ENCODE measurements at regions of chr17 and their contacts with region 1.

Region 1: DNA sequence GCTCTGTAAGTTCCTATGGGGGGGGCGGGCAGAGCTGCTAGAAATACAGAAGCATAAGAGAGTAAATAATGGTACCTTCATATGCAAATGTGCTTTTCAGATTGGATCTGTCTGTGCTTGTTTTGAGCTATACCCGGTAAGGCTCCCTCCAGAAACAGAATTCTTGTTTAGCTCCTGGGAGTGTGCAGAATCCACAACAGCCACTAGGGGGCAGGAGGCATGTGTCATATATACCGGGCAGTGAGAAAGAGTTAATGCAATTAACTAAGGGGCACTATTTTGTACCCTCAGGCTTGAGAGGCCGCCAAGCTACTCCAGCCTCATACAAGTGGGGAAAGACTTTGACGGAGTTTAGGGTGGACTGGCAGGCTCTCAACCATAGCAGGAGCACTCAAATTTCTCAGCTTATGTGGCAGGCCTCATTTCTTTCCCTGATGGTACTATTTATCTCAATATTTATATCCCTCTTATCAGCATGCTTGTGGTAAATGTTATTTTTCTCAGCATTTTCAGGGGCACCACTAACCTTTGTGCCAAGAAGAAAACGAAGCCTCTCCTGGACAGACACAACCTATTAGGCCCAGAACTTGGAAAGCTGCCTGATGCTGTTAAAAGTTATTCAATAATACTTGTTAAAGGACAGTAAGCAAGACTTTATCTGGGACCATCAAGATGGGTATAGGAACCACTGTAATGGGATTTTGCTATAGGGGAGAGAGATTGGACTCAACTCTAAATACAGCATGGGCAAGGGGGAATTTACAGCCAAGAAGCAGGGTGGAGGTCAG is 10.7 kb upstream of the CENPV start:
- DNase-seq: peak; percentile 93
- ATAC-seq: peak; percentile 98
- H3K4me3 Mint-ChIP-seq: no peak overlapping the region
- H3K27ac Mint-ChIP-seq: no peak overlapping the region
- H3K4me1 Mint-ChIP-seq: peaks cover 8% of the 10 kb centered on the region
- H3K27me3 Mint-ChIP-seq: no peaks in the 10 kb centered on the region
- CTCF ChIP-seq: peak; percentile 91

Region 2: DNA sequence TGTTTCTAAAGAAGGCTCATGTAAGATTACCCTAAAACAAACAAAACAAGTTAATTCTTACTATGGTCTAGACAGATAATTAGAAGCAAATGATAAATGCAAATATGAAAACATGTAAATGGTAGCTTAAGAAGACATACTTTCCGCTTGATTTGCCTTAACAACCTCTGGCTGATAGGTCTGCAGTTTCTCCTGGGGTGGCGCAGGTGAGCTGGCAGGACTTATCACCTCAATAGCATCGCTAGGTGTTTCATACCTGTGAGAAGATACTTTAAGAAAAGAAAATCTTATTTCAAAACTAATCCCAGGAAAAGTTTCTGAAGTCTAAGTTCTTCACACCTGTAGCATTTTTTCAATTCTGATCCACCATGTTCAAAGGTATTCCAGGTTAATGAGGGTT is 305.6 kb before region 1 on chr17:
- CTCF ChIA-PET with region 1: no interaction called
- POLR2A ChIA-PET with region 1: no interaction called
- intact Hi-C with region 1: no loop called
- DNase-seq: no peak
- ATAC-seq: no peak
- H3K4me3 Mint-ChIP-seq: no peak overlapping the region
- H3K27ac Mint-ChIP-seq: no peak overlapping the region
- H3K4me1 Mint-ChIP-seq: peaks cover 2% of the 10 kb centered on the region
- H3K27me3 Mint-ChIP-seq: no peaks in the 10 kb centered on the region
- CTCF ChIP-seq: no peak

Region 3: DNA sequence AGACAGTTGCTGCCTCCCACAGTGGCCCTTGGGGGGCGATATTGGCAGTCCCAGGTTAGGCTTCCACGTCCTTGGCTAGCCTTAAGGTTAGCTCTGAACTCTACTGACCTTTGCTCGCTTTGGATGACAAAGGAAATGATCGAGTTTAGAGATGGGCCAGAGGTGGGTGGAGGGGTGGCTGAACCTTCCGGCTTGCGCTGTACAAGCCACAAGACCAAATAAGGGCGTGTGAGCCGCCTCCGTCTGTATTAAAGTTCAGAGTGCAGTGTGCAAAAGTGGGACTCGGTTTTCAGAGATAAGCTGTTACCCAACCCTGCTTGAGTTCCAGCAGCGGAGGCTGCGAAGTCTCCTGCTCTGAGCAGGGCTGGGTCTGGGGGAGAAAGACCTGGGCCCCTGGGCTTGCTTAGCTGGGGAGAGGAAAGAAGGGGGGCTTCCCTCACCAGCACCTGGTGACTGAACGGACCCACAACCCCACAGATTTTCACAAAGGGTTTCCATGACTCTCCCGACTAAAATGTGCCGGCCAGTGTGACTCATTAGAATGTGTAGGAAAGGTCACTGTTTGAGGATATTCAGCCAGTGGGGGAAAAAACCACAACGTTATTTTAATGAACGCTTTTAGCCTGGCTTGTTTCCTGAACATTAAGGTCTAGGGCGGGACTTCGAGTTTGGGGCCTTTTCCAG is 77.8 kb before region 1 on chr17:
- CTCF ChIA-PET with region 1: interaction called, 15 read pairs
- POLR2A ChIA-PET with region 1: no interaction called
- intact Hi-C with region 1: loop called (anchors 10 kb)
- DNase-seq: peak; percentile 95
- ATAC-seq: peak; percentile 95
- H3K4me3 Mint-ChIP-seq: peak overlapping the region; percentile 71
- H3K27ac Mint-ChIP-seq: peak overlapping the region; percentile 98
- H3K4me1 Mint-ChIP-seq: peaks cover 55% of the 10 kb centered on the region
- H3K27me3 Mint-ChIP-seq: no peaks in the 10 kb centered on the region
- CTCF ChIP-seq: peak; percentile 28

Region 4: GRCh38 chr17:16353317-16354174 is 10.4 kb before region 1 on chr17 and contains the start of gene CENPV:
- CTCF ChIA-PET with region 1: interaction called, 69 read pairs
- POLR2A ChIA-PET with region 1: interaction called, 4 read pairs
- intact Hi-C with region 1: no loop called
- DNase-seq: peak; percentile 66
- ATAC-seq: peak; percentile 82
- H3K4me3 Mint-ChIP-seq: peak within 1 kb of the TSS; percentile 97
- H3K27ac Mint-ChIP-seq: peak within 1 kb of the TSS; percentile 93
- H3K4me1 Mint-ChIP-seq: peaks cover 18% of the 10 kb centered on the region
- H3K27me3 Mint-ChIP-seq: no peaks in the 10 kb centered on the region
- CTCF ChIP-seq: peak; percentile 9
- total RNA-seq, gene CENPV: 139 to 142 TPM

Region 5: DNA sequence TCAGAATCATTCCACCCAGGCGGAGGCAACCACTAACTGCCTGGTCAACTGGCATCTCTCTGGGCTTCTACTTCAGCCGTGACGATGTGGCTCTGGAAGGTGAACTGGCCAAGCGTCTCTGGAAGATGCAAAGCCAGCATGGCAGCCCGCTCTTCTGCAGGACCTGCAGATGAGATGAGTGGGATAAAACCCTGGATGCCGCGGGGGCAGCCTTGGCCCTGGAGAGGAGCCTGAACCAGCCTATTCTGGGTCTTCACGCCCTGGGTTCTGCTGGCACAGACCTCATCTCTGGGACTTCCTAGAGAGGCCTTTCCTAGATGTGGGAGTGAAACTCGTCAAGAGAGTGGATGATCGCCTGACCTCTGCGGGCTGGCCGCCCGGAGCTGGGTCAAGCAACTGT is 27.5 kb after region 1 on chr17:
- CTCF ChIA-PET with region 1: interaction called, 12 read pairs
- POLR2A ChIA-PET with region 1: no interaction called
- intact Hi-C with region 1: no loop called
- DNase-seq: no peak
- ATAC-seq: no peak
- H3K4me3 Mint-ChIP-seq: no peak overlapping the region
- H3K27ac Mint-ChIP-seq: no peak overlapping the region
- H3K4me1 Mint-ChIP-seq: peaks cover 10% of the 10 kb centered on the region
- H3K27me3 Mint-ChIP-seq: peaks cover 4% of the 10 kb centered on the region
- CTCF ChIP-seq: no peak

Region 6: DNA sequence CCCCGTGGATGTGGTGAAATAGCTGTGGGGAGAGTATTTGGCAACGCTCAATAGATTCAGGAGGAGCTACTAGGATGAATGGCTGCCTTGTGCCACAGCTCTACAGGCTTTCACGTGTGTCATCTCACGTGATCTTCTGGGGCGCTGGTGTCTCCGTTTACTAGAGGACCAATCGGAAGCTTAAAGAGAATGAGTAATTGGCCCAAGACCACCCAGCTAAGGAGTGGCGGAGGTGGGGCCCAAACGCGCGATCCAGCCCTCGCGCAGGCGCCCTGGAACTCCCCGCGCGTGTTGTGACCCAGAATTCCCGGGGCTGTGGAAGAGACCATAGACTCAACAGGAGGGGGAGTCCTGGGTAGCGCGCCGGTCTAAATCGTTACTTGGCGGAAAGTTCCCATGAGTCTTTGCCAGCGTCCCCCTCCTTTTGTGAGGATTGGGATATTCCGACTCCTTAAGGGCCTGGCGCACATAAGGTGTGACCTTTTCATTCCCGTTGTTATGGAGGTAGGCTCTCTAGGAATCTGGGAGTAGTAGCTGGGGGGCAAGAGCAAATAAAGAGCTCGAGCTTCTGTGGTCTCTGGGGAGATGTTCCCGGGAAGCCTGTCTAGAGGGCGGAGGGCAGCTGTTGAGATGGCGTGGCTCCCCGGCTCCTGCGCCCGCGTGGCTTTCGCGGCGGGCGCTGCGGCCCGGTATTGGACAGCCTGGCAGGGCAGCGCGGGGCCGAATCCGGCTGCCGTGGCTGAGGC is 74.8 kb after region 1 on chr17:
- CTCF ChIA-PET with region 1: interaction called, 11 read pairs
- POLR2A ChIA-PET with region 1: interaction called, 9 read pairs
- intact Hi-C with region 1: no loop called
- DNase-seq: peak; percentile 97
- ATAC-seq: peak; percentile 92
- H3K4me3 Mint-ChIP-seq: peak overlapping the region; percentile 96
- H3K27ac Mint-ChIP-seq: peak overlapping the region; percentile 97
- H3K4me1 Mint-ChIP-seq: peaks cover 43% of the 10 kb centered on the region
- H3K27me3 Mint-ChIP-seq: no peaks in the 10 kb centered on the region
- CTCF ChIP-seq: no peak

Region 7: GRCh38 chr17:16521070-16521727 is 157.3 kb after region 1 on chr17:
- CTCF ChIA-PET with region 1: interaction called, 90 read pairs
- POLR2A ChIA-PET with region 1: no interaction called
- intact Hi-C with region 1: loop called (anchors 2 kb)
- DNase-seq: peak; percentile 76
- ATAC-seq: peak; percentile 97
- H3K4me3 Mint-ChIP-seq: no peak overlapping the region
- H3K27ac Mint-ChIP-seq: no peak overlapping the region
- H3K4me1 Mint-ChIP-seq: peaks cover 9% of the 10 kb centered on the region
- H3K27me3 Mint-ChIP-seq: peaks cover 27% of the 10 kb centered on the region
- CTCF ChIP-seq: peak; percentile 90